ENCODE measurements at regions of chr7 and their contacts with region 1.

Region 1: GRCh38 chr7:831596-832166 is 595 bp upstream of the SUN1 start:
- DNase-seq: no peak
- ATAC-seq: peak; percentile 67
- H3K4me3 ChIP-seq: peak overlapping the region in 2 of 5 experiments; percentile 14 to 16
- H3K4me3 Mint-ChIP-seq: peak overlapping the region; percentile 85
- H3K27ac ChIP-seq: peak overlapping the region; percentile 76 to 89
- H3K27ac Mint-ChIP-seq: peak overlapping the region; percentile 93
- H3K4me1 ChIP-seq: peaks cover 31 to 32% of the 10 kb centered on the region in 2 donors
- H3K4me1 Mint-ChIP-seq: peaks cover 51% of the 10 kb centered on the region
- H3K27me3 ChIP-seq: no peaks in the 10 kb centered on the region
- H3K27me3 Mint-ChIP-seq: no peaks in the 10 kb centered on the region
- CTCF ChIP-seq: no peak

Region 2: DNA sequence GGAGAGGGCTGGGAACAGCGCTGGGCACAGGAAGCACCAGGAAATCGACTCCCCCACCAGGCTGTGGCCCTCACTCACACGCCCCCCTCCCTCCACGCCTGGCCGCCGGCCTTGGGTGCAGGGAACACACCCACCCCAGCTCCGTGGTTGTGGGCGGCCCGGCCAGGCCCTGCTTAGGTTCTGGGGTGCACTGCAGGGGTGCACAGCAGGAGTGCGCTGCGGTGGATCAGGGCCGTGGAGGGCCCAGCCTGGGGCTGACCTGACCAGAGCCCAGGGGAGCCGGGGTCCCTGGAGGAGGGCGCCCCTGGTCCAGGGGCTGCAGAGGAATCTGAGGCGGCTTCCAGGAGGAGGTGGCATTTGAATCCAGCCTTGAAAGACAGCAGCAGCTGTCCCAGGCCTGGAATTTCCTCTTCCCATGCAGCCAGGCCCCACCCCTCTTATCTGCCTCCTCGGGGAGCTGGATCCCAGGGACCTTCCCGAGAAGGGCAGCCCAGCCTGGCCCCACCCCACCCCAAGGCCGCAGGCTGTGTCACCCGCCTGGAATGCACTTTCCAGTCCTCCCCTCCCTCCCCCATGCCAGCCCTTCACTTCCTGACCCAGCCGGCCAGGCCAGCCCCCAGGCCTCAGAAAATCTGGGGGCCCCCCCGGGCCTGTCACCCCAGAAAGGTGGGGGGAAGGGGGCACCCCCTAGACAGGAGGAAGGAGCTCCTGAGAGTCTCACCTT is 293.6 kb before region 1 on chr7:
- CTCF ChIA-PET with region 1: no interaction called
- POLR2A ChIA-PET with region 1: no interaction called
- intact Hi-C with region 1: no loop called
- DNase-seq: no peak
- ATAC-seq: no peak
- H3K4me3 ChIP-seq: no peak overlapping the region
- H3K4me3 Mint-ChIP-seq: no peak overlapping the region
- H3K27ac ChIP-seq: no peak overlapping the region
- H3K27ac Mint-ChIP-seq: no peak overlapping the region
- H3K4me1 ChIP-seq: no peaks in the 10 kb centered on the region
- H3K4me1 Mint-ChIP-seq: peaks cover 4% of the 10 kb centered on the region
- H3K27me3 ChIP-seq: no peaks in the 10 kb centered on the region
- H3K27me3 Mint-ChIP-seq: peaks cover 5% of the 10 kb centered on the region
- CTCF ChIP-seq: no peak

Region 3: DNA sequence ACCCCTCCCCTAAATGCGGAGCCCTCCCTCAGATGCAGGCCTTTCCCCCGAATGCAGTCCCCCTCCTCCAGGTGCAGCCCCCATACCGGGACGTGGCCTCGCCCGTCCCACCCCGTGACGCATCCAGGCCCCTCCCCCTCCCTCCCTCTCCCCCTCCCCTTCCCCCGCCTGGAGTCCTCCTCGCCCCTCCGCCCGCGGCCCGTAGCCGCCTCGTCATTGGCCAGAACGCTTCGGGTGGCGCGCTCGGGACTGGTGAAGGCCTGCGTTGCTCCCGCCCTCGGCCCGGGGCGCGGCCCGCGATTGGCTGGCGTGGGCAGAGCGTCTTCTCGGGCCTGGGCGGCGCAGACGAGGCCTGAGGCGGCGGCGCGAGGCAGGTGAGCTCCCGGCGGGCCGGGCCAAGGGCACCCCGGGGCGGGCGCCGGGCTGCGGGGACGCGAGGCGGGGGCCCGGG is 15.4 kb before region 1 on chr7:
- CTCF ChIA-PET with region 1: interaction called, 6 read pairs
- POLR2A ChIA-PET with region 1: interaction called, 8 read pairs
- intact Hi-C with region 1: loop called (anchors 1 kb)
- DNase-seq: peak; percentile 97
- ATAC-seq: peak; percentile 92
- H3K4me3 ChIP-seq: peak overlapping the region in 4 of 5 experiments; percentile 49 to 71 (median 66)
- H3K4me3 Mint-ChIP-seq: peak overlapping the region; percentile 86
- H3K27ac ChIP-seq: no peak overlapping the region
- H3K27ac Mint-ChIP-seq: peak overlapping the region; percentile 73
- H3K4me1 ChIP-seq: peaks cover 29 to 43% of the 10 kb centered on the region in 2 donors
- H3K4me1 Mint-ChIP-seq: peaks cover 58% of the 10 kb centered on the region
- H3K27me3 ChIP-seq: no peaks in the 10 kb centered on the region
- H3K27me3 Mint-ChIP-seq: no peaks in the 10 kb centered on the region
- CTCF ChIP-seq: no peak